ENCODE measurements at regions of chr14 and their contacts with region 1.

Region 1: GRCh38 chr14:73295198-73295796 is 58.0 kb downstream of the PAPLN start:
- DNase-seq: peak; percentile 55

Region 2: DNA sequence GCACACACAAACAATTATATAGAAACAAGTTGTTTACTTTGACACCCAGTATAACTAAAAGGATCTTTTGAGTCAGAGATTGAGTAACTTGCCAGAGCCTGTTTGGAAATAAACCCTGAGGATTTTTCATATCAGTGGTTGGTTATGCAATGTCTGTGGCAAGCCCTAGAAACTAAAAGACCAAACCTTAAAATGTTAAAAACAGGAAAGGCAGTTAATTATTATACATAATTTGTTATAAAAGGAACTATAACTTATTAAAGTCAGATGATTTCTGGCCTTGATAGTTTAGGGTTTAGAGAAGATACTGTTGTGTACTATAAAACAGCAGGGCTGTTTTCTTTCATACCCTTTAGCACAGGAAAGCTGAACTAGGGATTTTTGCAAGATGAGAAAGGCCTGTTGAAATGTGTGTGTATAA is 114.9 kb before region 1 on chr14:
- in situ Hi-C with region 1: no loop called
- DNase-seq: peak; percentile 18

Region 3: GRCh38 chr14:73198253-73198652 is 97.0 kb before region 1 on chr14:
- in situ Hi-C with region 1: no loop called
- DNase-seq: no peak

Region 4: DNA sequence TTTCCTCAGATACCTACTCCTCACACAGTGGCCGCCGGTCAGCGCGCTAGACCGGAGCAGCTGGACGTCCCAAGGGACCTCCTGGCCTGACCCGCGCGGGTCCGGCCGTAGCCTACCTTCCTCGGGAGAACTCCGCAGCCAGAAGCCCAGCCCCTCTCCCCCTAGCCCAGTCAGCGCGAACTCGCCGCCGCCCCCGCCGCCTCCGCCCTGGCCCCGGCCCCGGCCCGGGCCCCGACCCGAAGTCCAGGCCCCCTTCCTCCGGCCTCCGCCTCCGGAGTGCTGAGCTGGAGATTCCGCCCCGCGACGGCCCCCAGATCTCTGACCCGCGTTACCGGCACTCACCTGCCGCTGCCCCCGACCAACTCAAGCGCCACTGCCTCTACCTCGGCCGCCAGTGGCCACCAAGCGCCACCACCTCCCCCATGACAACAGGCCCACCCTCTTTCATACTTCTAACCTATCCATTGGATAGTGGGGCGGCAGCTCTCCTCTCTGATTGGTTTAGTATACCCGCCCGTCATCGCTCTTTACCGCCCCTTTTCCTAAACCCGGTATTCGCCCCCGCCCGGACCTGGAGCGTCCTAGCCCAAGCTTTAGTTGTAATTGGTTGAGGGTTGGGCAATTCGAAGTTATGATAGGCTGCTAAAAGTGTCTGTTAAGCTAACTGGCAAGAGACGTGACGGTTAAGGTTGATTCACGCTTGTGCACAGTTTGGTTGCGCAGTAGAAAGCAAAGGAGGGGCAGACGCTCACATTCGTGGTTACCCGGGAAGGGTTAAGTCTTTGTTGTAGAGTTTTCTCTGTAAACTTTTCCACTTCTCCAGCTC is 163.1 kb after region 1 on chr14 and contains the start of gene NUMB:
- in situ Hi-C with region 1: loop called (anchors 25 kb)
- DNase-seq: peak; percentile 99
- total RNA-seq, gene NUMB: 15.0 and 24.9 TPM in 2 replicates